ENCODE measurements at regions of chr17 and their contacts with region 1.

Region 1: GRCh38 chr17:41665566-41666236 is 23.0 kb upstream of the EIF1 start:
- DNase-seq: no peak
- H3K4me3 ChIP-seq: peak overlapping the region; percentile 43
- CTCF ChIP-seq: peak; percentile 90

Region 2: GRCh38 chr17:40909351-40909750 is 756.4 kb before region 1 on chr17:
- in situ Hi-C with region 1: loop called (anchors 25 kb)
- DNase-seq: peak; percentile 87
- H3K4me3 ChIP-seq: no peak overlapping the region
- CTCF ChIP-seq: peak; percentile 70

Region 3: GRCh38 chr17:41615454-41615853 is 50.2 kb before region 1 on chr17:
- in situ Hi-C with region 1: no loop called
- DNase-seq: no peak
- H3K4me3 ChIP-seq: no peak overlapping the region
- CTCF ChIP-seq: no peak